Sigmoid colon (tissue), 7 donors: ENCODE measurements at regions of chr20 and their contacts with region 1.

Region 1: DNA sequence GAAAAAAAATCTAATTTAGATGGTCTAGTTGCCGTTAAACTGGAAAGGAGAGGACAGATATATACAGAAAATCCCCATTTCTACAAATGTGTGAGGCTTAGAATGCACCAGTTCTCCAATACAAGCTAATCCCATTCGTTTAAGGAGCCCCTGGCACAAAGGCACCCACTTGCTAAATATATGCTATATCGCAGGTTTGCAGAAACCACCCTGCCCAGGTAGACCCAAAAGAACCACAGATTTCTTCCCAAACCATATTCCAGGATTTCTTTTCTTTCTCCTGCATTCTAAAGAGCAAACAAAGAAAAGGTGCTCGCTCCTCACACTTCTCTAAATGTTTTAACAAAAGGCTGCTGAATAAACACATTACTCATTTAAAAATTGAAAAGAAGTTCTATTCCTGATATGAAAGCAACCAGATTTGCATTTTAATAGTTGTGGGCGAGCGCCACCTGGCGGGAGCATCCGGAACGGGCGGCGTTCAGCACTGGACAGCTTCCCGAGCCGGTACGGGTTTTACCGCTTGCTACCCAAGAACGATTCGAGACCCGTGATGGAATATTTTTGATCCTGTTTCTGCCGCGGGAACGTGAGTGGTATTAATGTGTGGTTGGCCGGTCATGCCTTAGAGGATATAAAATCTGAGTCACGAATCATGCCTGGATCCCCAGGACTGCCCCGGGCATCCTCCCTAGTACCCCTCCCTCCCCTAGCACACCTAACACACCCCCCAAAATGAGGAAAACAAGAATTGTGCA is 2.1 kb downstream of the PTPRT start:
- DNase-seq: peak; percentile 78
- H3K4me3 ChIP-seq: peak overlapping the region in 1 of 4 donors; percentile 19
- H3K27ac ChIP-seq: no peak overlapping the region
- H3K4me1 ChIP-seq: peaks cover 0 to 28% (median 27%) of the 10 kb centered on the region in 4 donors
- H3K27me3 ChIP-seq: peaks cover 21 to 45% (median 44%) of the 10 kb centered on the region in 3 donors
- CTCF ChIP-seq: peak; percentile 59 to 93 (median 79)
- EP300 ChIP-seq: no peak
- POLR2A ChIP-seq: no peak

Region 2: GRCh38 chr20:41738604-41739206 is 1449.0 kb before region 1 on chr20:
- intact Hi-C with region 1: loop called (anchors 5 kb)
- DNase-seq: no peak
- H3K4me3 ChIP-seq: no peak overlapping the region
- H3K27ac ChIP-seq: no peak overlapping the region
- H3K4me1 ChIP-seq: no peaks in the 10 kb centered on the region
- H3K27me3 ChIP-seq: no peaks in the 10 kb centered on the region
- CTCF ChIP-seq: peak; percentile 14 to 71 (median 45)
- EP300 ChIP-seq: no peak
- POLR2A ChIP-seq: no peak

Region 3: DNA sequence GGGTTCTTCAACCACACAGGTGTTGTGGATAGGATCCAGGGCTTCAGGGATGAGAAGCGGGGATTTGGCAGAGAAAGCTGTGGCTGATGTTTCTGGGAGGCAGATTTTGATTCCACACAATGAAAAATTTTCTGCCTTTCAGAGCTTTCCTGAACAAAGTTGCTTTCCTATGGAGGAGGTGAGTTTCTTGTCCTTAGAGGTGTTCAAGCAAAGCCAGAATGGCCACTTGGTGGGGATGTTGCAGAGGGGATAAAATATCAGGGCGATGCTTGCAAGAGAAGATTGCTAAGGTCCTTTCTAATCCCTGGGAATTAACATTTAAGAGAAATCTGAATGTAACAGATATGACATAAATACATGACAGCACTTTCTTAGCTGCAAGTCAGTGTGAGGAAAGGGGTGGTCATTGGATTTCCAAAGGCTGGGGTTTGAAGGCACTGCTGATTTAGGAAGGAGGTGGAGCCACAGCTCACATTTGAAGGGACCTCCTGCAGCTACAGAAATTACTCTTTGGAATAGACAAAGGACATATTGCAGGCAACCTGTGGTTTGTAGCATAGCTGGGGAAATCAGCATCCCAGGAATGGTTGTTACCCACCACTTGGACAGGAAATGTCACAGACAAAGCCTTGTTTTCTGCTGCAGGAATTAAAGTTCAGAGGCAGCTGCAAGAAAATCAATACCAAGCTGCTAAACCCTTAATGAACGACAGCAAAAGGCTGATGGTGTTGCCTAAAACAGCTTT is 1298.4 kb before region 1 on chr20:
- intact Hi-C with region 1: loop called (anchors 10 kb)
- DNase-seq: no peak
- H3K4me3 ChIP-seq: no peak overlapping the region
- H3K27ac ChIP-seq: no peak overlapping the region
- H3K4me1 ChIP-seq: no peaks in the 10 kb centered on the region
- H3K27me3 ChIP-seq: peaks cover 0 to 6% (median 0%) of the 10 kb centered on the region in 3 donors
- CTCF ChIP-seq: no peak
- EP300 ChIP-seq: no peak
- POLR2A ChIP-seq: no peak

Region 4: GRCh38 chr20:41955999-41956705 is 1231.5 kb before region 1 on chr20:
- intact Hi-C with region 1: loop called (anchors 5 kb)
- DNase-seq: no peak
- H3K4me3 ChIP-seq: no peak overlapping the region
- H3K27ac ChIP-seq: no peak overlapping the region
- H3K4me1 ChIP-seq: no peaks in the 10 kb centered on the region
- H3K27me3 ChIP-seq: no peaks in the 10 kb centered on the region
- CTCF ChIP-seq: peak in 2 of 4 experiments; percentile 9 to 33
- EP300 ChIP-seq: no peak
- POLR2A ChIP-seq: no peak

Region 5: GRCh38 chr20:42204203-42204942 is 983.3 kb before region 1 on chr20:
- intact Hi-C with region 1: loop called (anchors 5 kb)
- DNase-seq: no peak
- H3K4me3 ChIP-seq: no peak overlapping the region
- H3K27ac ChIP-seq: no peak overlapping the region
- H3K4me1 ChIP-seq: no peaks in the 10 kb centered on the region
- H3K27me3 ChIP-seq: no peaks in the 10 kb centered on the region
- CTCF ChIP-seq: peak in 2 of 4 experiments; percentile 22 to 23
- EP300 ChIP-seq: no peak
- POLR2A ChIP-seq: no peak

Region 6: GRCh38 chr20:42846784-42847490 is 340.7 kb before region 1 on chr20:
- intact Hi-C with region 1: no loop called
- DNase-seq: no peak
- H3K4me3 ChIP-seq: no peak overlapping the region
- H3K27ac ChIP-seq: no peak overlapping the region
- H3K4me1 ChIP-seq: no peaks in the 10 kb centered on the region
- H3K27me3 ChIP-seq: no peaks in the 10 kb centered on the region
- CTCF ChIP-seq: no peak
- EP300 ChIP-seq: no peak
- POLR2A ChIP-seq: no peak